CD4-positive, alpha-beta memory T cell (primary cell): ENCODE measurements at regions of chr4 and their contacts with region 1.

Region 1: GRCh38 chr4:38132107-38132673 is 172.0 kb downstream of the PTTG2 start:
- DNase-seq: peak; percentile 74 to 88 (median 77)
- H3K4me3 ChIP-seq: peak overlapping the region in 1 of 2 donors; percentile 32
- H3K4me3 Mint-ChIP-seq: peak overlapping the region; percentile 45 to 87 (median 72)
- H3K27ac ChIP-seq: peak overlapping the region; percentile 59
- H3K27ac Mint-ChIP-seq: peak overlapping the region; percentile 87 to 99 (median 95)
- H3K4me1 ChIP-seq: peaks cover 60% of the 10 kb centered on the region
- H3K4me1 Mint-ChIP-seq: peaks cover 45 to 71% (median 55%) of the 10 kb centered on the region in 4 donors
- H3K27me3 ChIP-seq: no peaks in the 10 kb centered on the region
- H3K27me3 Mint-ChIP-seq: peaks cover 0 to 3% of the 10 kb centered on the region in 2 donors

Region 2: DNA sequence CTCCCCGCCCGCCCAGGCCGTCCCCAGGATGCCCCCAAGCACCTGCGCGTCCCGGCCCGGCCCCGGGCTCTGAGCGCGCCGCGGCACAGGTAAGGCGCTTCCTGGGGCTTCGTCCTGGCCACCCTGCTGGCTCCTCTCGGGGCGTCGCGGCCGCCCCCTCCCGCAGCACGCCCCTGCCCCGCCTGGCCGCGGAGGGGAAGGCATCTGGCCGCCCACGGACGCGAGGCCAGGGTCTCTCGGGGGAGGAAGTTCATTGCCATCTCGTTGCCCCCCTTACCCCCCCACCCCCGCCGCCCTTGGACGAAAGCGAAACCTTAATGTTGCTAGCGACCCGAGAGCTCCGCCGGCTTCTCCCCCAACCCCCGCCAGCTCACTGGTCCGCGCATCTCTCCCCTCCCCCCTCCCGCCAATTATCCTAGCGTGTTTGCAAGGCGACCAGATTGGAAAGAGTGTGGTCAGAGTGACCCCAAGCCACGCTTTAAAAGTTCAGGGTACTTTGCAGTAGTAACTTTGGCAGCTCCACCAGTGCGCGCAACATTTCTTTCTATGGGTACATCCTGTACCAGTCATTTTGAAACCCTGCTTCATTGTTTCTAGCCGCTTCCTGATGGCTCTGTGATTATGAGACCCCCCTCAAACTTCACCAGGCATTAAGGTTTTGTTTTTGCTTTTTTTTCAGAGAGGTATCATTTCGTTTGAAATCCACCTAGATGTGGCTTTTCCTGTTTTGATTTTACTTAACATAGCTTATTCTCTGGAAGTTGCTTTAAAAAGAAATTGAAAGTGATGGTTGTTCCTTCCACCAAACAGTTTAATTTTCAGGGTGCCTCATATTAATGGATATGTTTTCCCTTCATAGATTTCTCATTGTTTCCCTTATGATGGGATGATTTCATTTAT is 240.7 kb before region 1 on chr4:
- CTCF ChIA-PET with region 1: no interaction called
- POLR2A ChIA-PET with region 1: no interaction called
- intact Hi-C with region 1: loop called (anchors 5 kb)
- DNase-seq: peak; percentile 54 to 72 (median 65)
- H3K4me3 ChIP-seq: peak overlapping the region; percentile 69 to 85
- H3K4me3 Mint-ChIP-seq: peak overlapping the region; percentile 93 to 99 (median 97)
- H3K27ac ChIP-seq: peak overlapping the region; percentile 61
- H3K27ac Mint-ChIP-seq: peak overlapping the region; percentile 90 to 98 (median 96)
- H3K4me1 ChIP-seq: peaks cover 33% of the 10 kb centered on the region
- H3K4me1 Mint-ChIP-seq: peaks cover 20 to 47% (median 40%) of the 10 kb centered on the region in 4 donors
- H3K27me3 ChIP-seq: no peaks in the 10 kb centered on the region
- H3K27me3 Mint-ChIP-seq: no peaks in the 10 kb centered on the region

Region 3: DNA sequence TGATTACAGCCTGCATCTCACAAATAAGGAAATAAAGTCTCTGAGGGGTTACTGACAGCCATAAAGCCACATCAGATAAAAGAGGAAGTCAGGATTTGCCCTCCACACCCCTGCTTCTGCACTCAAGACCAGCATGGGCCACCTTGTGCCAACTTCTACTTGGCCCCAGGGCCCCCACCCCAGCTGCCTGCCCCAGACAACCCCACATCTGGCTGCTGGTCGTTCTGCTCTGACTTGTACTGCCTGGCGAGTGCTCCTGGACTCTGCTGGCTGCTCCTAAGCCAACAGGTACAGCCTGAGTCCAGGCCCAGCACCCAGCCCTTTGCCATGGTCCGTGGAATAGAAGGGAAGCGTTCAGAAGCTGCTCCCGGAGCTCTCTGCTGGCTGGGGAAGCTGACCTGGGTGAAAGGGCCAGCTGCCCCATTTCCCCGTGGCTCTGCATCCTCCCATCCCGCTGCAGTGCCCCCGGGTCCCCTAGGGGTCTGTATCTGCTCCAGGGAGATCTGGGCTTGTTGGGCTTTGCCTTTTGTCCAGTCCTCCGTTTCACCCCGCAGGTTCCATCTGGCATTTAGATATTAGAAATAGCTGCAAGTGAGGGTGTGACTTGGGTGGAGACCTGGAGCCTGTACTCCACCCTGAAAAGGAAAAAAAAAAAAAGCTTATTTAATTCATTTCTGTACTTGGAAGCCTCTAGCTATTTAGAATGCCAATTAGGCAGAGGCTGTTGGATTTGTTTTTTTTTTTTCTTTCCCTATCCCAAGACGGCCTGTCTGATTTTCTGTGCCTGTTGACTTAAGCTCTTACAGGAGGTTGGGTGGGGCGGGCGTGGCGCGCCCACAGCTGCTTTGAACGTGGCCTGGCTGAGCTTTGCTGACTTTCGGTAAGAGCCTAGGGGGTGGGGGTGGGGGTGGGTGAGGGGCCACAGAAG is 22.8 kb after region 1 on chr4:
- CTCF ChIA-PET with region 1: interaction called, 5 read pairs
- POLR2A ChIA-PET with region 1: interaction called, 29 read pairs
- intact Hi-C with region 1: loop called (anchors 2 kb)
- DNase-seq: peak in 2 of 5 donors; percentile 19 to 27
- H3K4me3 ChIP-seq: no peak overlapping the region
- H3K4me3 Mint-ChIP-seq: peak overlapping the region in 6 of 8 donors; percentile 58 to 75 (median 66)
- H3K27ac ChIP-seq: no peak overlapping the region
- H3K27ac Mint-ChIP-seq: peak overlapping the region in 6 of 7 donors; percentile 33 to 85 (median 66)
- H3K4me1 ChIP-seq: peaks cover 42% of the 10 kb centered on the region
- H3K4me1 Mint-ChIP-seq: peaks cover 0 to 66% (median 43%) of the 10 kb centered on the region in 4 donors
- H3K27me3 ChIP-seq: no peaks in the 10 kb centered on the region
- H3K27me3 Mint-ChIP-seq: no peaks in the 10 kb centered on the region

Region 4: DNA sequence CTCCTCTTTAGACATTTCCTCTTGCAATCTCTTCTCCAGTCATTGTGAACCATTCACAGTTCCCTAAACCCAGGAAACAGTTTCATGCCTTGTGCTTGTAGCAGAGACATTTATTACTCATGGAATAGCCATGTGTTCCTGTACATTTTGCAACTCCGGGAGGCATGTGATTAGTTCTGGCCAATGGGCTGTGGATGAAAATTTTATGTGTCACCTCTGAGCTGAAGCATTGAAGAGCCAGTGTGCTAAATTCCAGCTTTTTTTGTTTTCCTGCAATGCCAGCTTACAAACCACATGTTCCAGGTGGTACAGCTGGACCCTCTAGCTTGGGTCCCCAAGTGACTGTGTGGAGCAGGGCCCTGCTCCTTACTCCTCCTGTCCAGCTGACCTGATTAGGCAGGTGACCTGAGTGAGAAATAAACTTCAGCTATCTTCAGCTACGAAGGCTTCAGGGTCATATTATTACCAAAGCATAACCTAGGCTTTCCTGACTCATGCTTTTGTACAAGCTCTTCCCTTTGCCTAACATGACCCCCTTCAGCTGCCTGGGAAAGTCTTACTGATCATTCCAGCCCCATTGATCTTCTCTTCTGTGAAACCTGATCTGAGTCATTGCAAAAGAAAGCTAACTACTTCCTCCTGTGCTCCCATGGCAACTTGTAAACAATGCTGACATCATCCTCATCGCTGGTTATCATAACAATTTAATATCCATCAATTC is 28.5 kb after region 1 on chr4:
- CTCF ChIA-PET with region 1: interaction called, 3 read pairs
- POLR2A ChIA-PET with region 1: interaction called, 29 read pairs
- intact Hi-C with region 1: loop called (anchors 1 kb)
- DNase-seq: peak; percentile 66 to 85 (median 81)
- H3K4me3 ChIP-seq: no peak overlapping the region
- H3K4me3 Mint-ChIP-seq: peak overlapping the region in 3 of 8 donors; percentile 1 to 22 (median 14)
- H3K27ac ChIP-seq: peak overlapping the region; percentile 44
- H3K27ac Mint-ChIP-seq: peak overlapping the region; percentile 71 to 98 (median 91)
- H3K4me1 ChIP-seq: peaks cover 31% of the 10 kb centered on the region
- H3K4me1 Mint-ChIP-seq: peaks cover 11 to 48% (median 36%) of the 10 kb centered on the region in 4 donors
- H3K27me3 ChIP-seq: no peaks in the 10 kb centered on the region
- H3K27me3 Mint-ChIP-seq: no peaks in the 10 kb centered on the region

Region 5: DNA sequence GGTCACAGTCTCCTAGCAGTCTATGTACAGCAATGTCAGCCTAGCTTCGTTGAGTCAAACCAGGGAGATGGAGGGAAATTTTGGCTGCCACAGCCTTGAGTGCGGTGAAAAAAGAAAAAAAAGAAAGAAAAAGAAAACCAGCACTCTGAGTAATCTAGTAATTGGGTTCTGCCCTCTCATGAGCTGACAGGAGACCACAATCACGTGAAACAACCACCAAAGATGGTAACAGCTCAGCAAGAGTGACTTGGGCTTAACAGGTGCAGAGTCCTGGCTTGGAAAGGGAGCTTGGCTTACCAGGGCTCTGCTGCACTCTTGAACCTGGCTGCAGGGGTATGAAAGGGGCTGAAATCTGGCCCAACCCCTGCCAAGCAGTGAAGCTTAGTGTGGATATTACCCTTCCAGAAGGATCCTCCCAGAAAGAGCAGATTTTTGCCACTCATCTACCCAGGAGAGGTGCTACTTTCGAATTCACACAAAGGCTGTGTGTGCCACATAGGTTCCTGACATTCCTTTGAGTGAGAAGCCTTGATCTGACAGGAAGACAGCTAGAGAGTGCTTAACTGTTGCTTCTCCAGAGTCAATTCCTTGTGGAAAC is 178.4 kb after region 1 on chr4:
- CTCF ChIA-PET with region 1: no interaction called
- POLR2A ChIA-PET with region 1: no interaction called
- intact Hi-C with region 1: loop called (anchors 2 kb)
- DNase-seq: peak; percentile 83 to 91 (median 86)
- H3K4me3 ChIP-seq: peak overlapping the region in 1 of 2 donors; percentile 41
- H3K4me3 Mint-ChIP-seq: peak overlapping the region; percentile 64 to 88 (median 76)
- H3K27ac ChIP-seq: peak overlapping the region; percentile 33
- H3K27ac Mint-ChIP-seq: peak overlapping the region; percentile 84 to 96 (median 92)
- H3K4me1 ChIP-seq: peaks cover 53% of the 10 kb centered on the region
- H3K4me1 Mint-ChIP-seq: peaks cover 39 to 71% (median 54%) of the 10 kb centered on the region in 4 donors
- H3K27me3 ChIP-seq: no peaks in the 10 kb centered on the region
- H3K27me3 Mint-ChIP-seq: no peaks in the 10 kb centered on the region

Region 6: DNA sequence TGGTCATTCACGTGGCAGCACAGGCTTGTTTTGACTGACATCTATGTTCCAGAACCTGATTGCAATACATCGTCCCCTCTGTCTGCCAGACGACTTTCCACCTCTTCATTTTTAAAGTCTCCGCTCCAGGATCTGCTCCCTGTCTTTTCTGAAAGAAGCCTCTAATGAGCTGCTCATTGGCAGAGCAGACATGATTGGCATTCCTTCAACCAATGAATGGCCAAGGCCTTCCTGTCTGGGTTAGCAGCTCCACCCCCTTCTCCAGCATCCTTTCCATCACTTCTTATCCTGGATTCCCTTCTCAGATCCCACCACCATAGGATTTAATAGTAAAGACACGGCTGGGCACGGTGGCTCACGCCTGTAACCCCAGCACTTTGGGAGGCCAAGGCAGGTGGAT is 329.2 kb after region 1 on chr4:
- CTCF ChIA-PET with region 1: no interaction called
- POLR2A ChIA-PET with region 1: no interaction called
- intact Hi-C with region 1: no loop called
- DNase-seq: no peak
- H3K4me3 ChIP-seq: no peak overlapping the region
- H3K4me3 Mint-ChIP-seq: no peak overlapping the region
- H3K27ac ChIP-seq: no peak overlapping the region
- H3K27ac Mint-ChIP-seq: no peak overlapping the region
- H3K4me1 ChIP-seq: peaks cover 14% of the 10 kb centered on the region
- H3K4me1 Mint-ChIP-seq: peaks cover 10 to 24% (median 17%) of the 10 kb centered on the region in 4 donors
- H3K27me3 ChIP-seq: no peaks in the 10 kb centered on the region
- H3K27me3 Mint-ChIP-seq: no peaks in the 10 kb centered on the region

Region 7: GRCh38 chr4:38663801-38664705 is 531.9 kb after region 1 on chr4 and contains the start of gene KLF3:
- CTCF ChIA-PET with region 1: no interaction called
- POLR2A ChIA-PET with region 1: no interaction called
- intact Hi-C with region 1: loop called (anchors 2 kb)
- DNase-seq: peak; percentile 93 to 96 (median 94)
- H3K4me3 ChIP-seq: peak within 1 kb of the TSS; percentile 83 to 92
- H3K4me3 Mint-ChIP-seq: peak within 1 kb of the TSS; percentile 89 to 100 (median 98)
- H3K27ac ChIP-seq: peak within 1 kb of the TSS; percentile 92
- H3K27ac Mint-ChIP-seq: peak within 1 kb of the TSS; percentile 91 to 100 (median 99)
- H3K4me1 ChIP-seq: peaks cover 46% of the 10 kb centered on the region
- H3K4me1 Mint-ChIP-seq: peaks cover 40 to 80% (median 56%) of the 10 kb centered on the region in 4 donors
- H3K27me3 ChIP-seq: no peaks in the 10 kb centered on the region
- H3K27me3 Mint-ChIP-seq: no peaks in the 10 kb centered on the region
- total RNA-seq, gene KLF3: 119 to 122 TPM

Region 8: DNA sequence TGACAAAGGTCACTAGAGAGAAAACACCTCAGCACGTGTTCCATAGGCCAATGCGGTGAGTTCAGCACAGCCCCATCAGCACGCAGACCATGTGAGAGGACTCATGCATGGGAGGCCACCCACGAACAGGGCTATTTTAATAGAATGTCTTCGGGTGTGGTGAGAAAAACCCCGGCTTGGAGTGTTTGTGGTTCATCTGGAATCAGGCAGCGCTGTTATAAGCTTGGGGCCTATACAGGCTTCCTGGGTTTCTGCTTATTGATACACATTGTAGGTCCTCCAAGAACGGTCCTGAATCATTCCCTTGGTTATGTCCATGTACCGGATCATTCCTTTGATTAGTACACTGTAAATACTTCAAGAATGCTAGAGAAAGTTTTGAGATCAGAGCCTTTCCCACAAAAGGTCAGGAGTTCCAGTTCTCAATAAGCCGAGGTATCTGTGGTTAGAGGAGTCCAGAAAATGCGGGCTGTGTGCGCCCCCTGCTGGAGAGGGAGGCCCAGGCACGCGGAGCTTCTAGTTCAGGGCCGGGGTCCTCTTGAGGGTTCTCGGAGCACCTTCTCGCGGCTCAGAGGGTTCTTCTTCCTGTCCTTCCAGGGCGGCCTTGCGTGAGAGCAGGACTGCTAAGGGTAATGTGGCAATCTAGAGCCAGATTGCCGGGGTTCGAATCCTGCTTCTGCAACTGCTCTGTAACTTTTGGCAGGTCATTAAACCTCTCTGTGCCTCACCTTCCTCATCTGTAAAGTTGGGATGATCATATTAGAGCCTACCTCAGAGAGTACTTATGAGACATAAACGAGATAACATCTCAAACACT is 598.8 kb after region 1 on chr4:
- CTCF ChIA-PET with region 1: interaction called, 4 read pairs
- POLR2A ChIA-PET with region 1: no interaction called
- intact Hi-C with region 1: loop called (anchors 5 kb)
- DNase-seq: peak; percentile 75 to 77 (median 76)
- H3K4me3 ChIP-seq: no peak overlapping the region
- H3K4me3 Mint-ChIP-seq: peak overlapping the region in 1 of 8 donors; percentile 39
- H3K27ac ChIP-seq: no peak overlapping the region
- H3K27ac Mint-ChIP-seq: peak overlapping the region in 2 of 7 donors; percentile 8 to 62
- H3K4me1 ChIP-seq: peaks cover 18% of the 10 kb centered on the region
- H3K4me1 Mint-ChIP-seq: peaks cover 12 to 29% (median 18%) of the 10 kb centered on the region in 4 donors
- H3K27me3 ChIP-seq: no peaks in the 10 kb centered on the region
- H3K27me3 Mint-ChIP-seq: peaks cover 0 to 3% of the 10 kb centered on the region in 2 donors